GM13977 (cell line): ENCODE measurements at regions of chr5 and their contacts with region 1.

Region 1: DNA sequence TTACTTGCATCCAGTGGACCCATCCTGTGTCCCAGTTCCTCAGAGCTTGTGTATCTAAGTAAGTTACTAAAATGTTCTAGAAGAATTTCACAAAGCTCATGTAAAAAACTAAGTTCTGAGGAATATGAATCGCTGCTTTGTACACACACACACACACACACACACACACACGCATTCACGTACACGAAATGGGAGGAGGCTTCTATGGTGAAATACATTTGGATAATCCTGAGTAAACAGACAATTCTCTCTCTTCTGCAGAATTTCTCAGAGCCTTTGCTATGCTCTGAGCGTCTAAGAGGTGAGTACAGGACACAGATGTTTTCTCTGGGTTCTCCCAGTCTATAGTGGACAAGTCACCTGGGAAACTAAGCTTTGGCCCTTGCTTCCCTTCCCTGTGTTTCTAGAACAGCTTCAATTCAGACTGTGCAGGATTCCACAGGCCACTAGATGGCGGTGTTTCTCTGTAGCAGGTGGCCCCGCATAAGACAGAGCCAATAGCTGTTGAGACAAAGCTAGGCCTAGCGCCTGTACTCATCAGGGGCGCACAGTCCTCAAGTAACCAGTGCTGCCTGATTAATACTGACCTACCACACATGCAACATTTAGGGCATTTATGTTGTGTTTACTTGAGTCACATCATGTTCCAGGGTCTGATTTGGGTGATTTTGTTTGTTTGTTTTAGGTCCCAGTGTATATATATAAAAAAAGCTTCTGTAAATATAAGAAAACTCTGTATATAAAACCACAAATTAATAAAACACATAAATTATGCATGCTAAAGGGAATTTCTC is 114.8 kb downstream of the LIFR start:
- DNase-seq: peak; percentile 82
- CTCF ChIP-seq: peak; percentile 97

Region 2: DNA sequence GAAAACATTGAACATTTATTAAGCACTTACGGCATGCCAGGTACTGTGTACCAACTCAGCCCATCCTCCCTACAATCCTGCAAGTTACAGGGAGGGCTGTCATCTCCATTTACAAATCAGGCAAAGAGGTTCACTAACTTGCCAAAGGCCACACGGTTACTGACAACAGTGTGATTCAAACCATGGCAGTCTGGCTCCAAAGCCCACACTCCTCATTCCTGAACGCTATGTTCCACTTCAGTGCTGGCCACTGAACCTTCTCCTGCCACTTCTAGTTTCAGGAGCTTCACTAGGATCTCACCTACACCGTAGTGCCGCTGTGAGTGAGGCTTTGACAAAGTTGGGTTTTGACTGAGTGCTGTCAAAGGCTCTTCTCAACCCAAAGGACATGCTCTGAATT is 122.0 kb after region 1 on chr5:
- in situ Hi-C with region 1: no loop called
- DNase-seq: no peak
- CTCF ChIP-seq: no peak

Region 3: GRCh38 chr5:38809388-38810359 is 368.0 kb after region 1 on chr5:
- in situ Hi-C with region 1: loop called (anchors 25 kb)
- DNase-seq: peak; percentile 68
- CTCF ChIP-seq: peak; percentile 75

Region 4: GRCh38 chr5:38922199-38922598 is 480.5 kb after region 1 on chr5:
- in situ Hi-C with region 1: loop called (anchors 25 kb)
- DNase-seq: peak; percentile 61
- CTCF ChIP-seq: peak; percentile 89

Region 5: DNA sequence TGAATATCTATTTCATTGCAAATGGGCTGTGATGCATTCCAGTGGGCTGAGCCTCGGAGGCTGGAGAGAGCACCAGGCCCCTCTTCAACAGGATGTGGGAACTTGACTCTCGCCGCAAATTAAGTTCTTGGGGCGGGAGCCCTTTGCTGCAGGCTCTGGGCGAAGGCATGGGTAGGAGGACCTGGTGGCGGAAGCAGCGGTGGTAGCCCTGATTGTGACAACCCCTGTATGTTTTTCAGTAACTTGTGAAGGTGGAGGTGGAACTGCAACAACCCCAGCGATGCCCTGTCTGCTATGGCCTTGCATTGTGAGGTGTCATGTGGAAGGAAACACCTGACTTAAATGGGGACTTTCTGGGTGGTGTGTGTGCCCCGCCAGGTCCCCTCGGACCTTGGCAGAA is 768.3 kb after region 1 on chr5:
- in situ Hi-C with region 1: no loop called
- DNase-seq: no peak
- CTCF ChIP-seq: no peak